Activated B cell treated with CpG ODN at 0.5 μM for 24 hours (primary cell): ENCODE measurements at regions of chr10 and their contacts with region 1.

Region 1: DNA sequence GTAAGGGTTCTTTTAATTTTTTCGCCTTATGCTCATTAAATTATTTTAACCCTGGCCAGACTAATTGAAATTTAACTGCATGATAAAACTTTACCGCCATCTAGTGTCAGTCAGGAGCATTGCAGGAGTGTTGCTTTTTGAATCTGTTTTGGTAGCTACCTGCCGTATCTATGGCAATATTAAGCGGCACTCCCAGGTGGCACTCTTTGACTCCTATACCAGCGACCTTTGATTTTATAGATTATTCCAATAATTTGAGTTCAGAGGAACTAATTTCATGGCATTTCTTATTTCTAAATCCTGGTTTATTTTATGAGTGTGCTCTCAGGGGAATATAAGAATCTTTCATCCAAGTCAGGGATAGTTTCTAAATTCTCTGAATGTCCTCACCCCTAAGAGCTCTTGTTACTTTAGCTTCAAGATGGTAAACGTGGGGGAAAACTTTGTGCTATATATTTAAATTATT is 198.9 kb downstream of the REEP3 start:
- DNase-seq: no peak
- ATAC-seq: peak; percentile 94
- H3K4me3 Mint-ChIP-seq: no peak overlapping the region
- H3K27ac Mint-ChIP-seq: no peak overlapping the region
- H3K4me1 Mint-ChIP-seq: peaks cover 12% of the 10 kb centered on the region
- H3K27me3 Mint-ChIP-seq: peaks cover 12% of the 10 kb centered on the region
- CTCF ChIP-seq: peak; percentile 100

Region 2: GRCh38 chr10:62594093-62594520 is 1126.0 kb before region 1 on chr10:
- CTCF ChIA-PET with region 1: interaction called, 3 read pairs
- POLR2A ChIA-PET with region 1: no interaction called
- intact Hi-C with region 1: loop called (anchors 10 kb)
- DNase-seq: peak; percentile 41
- ATAC-seq: peak; percentile 88
- H3K4me3 Mint-ChIP-seq: no peak overlapping the region
- H3K27ac Mint-ChIP-seq: no peak overlapping the region
- H3K4me1 Mint-ChIP-seq: peaks cover 16% of the 10 kb centered on the region
- H3K27me3 Mint-ChIP-seq: no peaks in the 10 kb centered on the region
- CTCF ChIP-seq: peak; percentile 74

Region 3: DNA sequence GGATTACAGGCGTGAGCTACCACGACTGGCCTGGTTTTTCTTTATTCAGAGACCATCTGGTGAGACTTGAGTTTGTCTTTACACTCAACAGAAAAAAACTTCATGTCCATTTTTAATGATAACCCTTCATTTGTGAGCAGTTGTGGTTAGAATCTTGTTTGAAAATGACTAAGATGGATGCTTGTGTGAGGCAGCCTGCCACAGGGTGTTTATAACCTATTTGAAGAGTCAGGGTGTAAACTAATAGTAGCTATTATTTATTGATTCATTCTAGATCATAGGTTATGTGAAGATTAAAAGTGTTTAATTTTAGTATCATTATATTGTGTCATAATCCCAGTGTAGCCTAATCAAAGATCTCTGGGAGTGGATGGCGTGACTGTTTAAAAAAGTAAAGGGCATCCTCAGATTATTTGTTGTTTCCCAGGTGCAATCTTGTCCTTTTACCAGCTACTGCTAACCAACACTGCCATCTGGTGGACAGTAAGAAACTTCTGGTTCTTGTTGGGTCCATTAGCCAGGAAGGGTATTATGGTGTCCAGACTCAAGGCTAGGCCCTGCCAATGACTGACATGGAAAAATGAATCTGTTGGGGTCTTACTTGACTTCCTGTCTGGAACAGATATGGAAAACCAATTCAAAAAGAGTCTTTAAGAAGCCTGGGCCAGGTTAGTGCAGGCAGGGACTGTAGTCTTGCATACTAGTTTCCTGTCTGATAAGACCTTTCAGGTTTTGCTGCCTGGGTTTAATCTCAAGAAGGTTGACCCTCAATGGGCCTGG is 562.1 kb before region 1 on chr10:
- CTCF ChIA-PET with region 1: interaction called, 20 read pairs
- POLR2A ChIA-PET with region 1: interaction called, 3 read pairs
- intact Hi-C with region 1: no loop called
- DNase-seq: no peak
- ATAC-seq: peak; percentile 67
- H3K4me3 Mint-ChIP-seq: no peak overlapping the region
- H3K27ac Mint-ChIP-seq: no peak overlapping the region
- H3K4me1 Mint-ChIP-seq: peaks cover 9% of the 10 kb centered on the region
- H3K27me3 Mint-ChIP-seq: no peaks in the 10 kb centered on the region
- CTCF ChIP-seq: no peak

Region 4: GRCh38 chr10:63206997-63207811 is 512.9 kb before region 1 on chr10:
- CTCF ChIA-PET with region 1: interaction called, 23 read pairs
- POLR2A ChIA-PET with region 1: no interaction called
- intact Hi-C with region 1: no loop called
- DNase-seq: no peak
- ATAC-seq: peak; percentile 62
- H3K4me3 Mint-ChIP-seq: no peak overlapping the region
- H3K27ac Mint-ChIP-seq: peak overlapping the region; percentile 75
- H3K4me1 Mint-ChIP-seq: peaks cover 70% of the 10 kb centered on the region
- H3K27me3 Mint-ChIP-seq: no peaks in the 10 kb centered on the region
- CTCF ChIP-seq: no peak

Region 5: DNA sequence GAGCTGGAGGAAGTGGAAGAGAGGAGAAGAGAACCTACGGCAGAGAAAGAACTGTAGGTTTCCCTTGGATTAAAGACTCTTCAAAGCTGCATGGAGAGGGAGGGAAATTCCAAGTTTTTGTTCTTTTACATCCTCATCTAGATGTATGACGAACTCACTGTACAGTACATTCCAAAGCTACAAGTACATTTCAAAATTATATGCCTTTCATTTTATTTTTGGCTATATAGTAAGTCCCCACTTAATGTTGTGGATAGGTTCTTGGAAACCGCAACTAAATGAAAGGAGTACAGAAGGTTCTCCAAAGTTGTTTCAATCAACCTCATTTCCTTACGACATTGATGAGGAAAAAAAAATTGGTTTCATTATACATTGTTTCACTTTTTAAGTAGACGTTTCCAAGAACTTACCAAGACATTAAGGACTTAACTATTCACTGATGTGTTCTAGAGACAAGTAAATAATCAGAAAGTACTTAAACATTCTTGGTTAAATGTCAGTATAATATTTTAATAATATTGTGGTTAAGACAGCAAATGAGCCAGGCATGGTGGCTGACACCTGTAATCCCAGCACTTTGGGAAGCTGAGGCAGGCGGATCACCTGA is 238.2 kb before region 1 on chr10:
- CTCF ChIA-PET with region 1: no interaction called
- POLR2A ChIA-PET with region 1: interaction called, 11 read pairs
- intact Hi-C with region 1: no loop called
- DNase-seq: no peak
- ATAC-seq: no peak
- H3K4me3 Mint-ChIP-seq: no peak overlapping the region
- H3K27ac Mint-ChIP-seq: no peak overlapping the region
- H3K4me1 Mint-ChIP-seq: peaks cover 11% of the 10 kb centered on the region
- H3K27me3 Mint-ChIP-seq: no peaks in the 10 kb centered on the region
- CTCF ChIP-seq: no peak